ENCODE measurements at regions of chr11 and their contacts with region 1.

Region 1: DNA sequence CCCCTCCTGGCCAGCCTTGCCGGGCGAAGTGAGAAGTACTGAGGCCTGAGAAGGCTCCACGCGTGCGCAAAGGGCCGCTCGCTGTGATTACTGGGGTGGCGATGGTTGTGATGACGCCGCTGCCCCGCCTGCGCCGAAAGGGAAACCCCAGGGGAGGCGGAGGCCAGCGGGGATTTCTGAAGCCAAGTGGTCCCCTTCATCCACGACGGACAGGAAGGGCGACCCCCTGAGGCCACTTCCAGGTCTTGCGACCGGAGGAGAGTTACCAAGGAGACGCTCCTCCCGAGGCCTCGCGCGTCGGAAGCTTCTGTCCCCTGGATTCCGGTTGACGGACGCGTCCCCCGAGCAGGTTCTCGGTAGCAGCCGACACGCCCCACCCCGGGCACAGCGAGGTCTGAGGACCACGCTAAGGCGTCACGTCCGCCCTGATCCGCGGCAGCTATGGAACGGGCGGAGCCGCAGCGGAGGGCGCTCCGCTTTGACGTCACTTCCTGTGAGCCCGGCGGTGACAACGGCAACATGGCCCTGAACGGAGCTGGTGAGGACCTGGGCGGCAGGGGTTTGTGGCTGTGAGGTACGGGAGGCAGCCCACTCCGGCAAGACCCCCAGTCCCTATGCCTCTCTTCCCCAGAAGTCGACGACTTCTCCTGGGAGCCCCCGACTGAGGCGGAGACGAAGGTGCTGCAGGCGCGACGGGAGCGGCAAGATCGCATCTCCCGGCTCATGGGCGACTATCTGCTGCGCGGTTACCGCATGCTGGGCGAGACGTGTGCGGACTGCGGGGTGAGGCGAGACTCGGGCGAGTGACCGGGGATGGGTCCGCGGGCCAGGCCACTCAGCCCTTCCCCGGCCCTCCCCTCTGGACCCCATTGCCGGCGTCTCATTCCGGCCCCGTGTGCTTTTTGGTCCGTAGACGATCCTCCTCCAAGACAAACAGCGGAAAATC is at the start of gene ZNRD2:
- DNase-seq: peak; percentile 98 to 99
- ATAC-seq: peak; percentile 73
- total RNA-seq, gene ZNRD2: 15.4 to 18.5 TPM

Region 2: DNA sequence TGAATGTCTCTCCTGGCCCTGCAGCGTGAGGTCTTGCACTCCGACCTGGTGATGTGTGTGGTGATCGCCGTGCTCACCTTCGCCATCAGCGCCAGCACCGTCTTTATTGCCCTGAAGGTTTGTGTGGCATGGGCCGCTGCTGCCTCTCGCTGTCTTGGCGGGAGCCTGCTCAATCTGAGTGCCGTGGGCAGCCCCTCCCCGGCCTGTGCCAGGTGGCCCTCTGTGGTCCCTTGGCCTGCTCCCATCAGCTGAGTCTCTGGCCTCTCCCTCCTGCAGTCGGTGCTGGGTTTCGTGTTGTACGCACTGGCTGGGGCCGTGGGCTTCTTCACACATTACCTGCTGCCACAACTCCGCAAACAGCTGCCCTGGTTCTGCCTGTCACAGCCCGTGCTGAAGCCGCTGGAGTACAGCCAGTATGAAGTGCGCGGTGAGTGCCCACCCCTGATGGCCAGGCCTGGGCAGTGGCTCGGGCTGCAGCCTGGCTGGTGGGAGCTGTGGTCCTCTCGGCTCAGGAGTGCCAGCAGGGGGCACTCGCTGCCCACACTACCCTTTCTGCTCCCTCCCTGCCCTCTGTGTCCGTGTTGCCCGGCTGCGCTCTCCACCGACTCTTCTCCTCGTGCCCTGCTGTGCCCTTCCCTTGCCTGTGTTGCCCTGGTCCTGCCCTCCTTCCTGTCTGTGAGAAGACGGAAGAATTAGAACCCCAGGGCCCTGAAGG is 55.5 kb after region 1 on chr11:
- intact Hi-C with region 1: loop called in 1 of 2 experiments (anchors 10 kb)
- DNase-seq: peak in 1 of 2 donors; percentile 74
- ATAC-seq: peak; percentile 87